Activated CD8-positive, alpha-beta memory T cell treated with anti-CD3 and anti-CD28 coated beads, Interleukin-2, amount 10 ng/mL, durations not matched to agents 7 days and 5 days (primary cell): ENCODE measurements at regions of chr17 and their contacts with region 1.

Region 1: DNA sequence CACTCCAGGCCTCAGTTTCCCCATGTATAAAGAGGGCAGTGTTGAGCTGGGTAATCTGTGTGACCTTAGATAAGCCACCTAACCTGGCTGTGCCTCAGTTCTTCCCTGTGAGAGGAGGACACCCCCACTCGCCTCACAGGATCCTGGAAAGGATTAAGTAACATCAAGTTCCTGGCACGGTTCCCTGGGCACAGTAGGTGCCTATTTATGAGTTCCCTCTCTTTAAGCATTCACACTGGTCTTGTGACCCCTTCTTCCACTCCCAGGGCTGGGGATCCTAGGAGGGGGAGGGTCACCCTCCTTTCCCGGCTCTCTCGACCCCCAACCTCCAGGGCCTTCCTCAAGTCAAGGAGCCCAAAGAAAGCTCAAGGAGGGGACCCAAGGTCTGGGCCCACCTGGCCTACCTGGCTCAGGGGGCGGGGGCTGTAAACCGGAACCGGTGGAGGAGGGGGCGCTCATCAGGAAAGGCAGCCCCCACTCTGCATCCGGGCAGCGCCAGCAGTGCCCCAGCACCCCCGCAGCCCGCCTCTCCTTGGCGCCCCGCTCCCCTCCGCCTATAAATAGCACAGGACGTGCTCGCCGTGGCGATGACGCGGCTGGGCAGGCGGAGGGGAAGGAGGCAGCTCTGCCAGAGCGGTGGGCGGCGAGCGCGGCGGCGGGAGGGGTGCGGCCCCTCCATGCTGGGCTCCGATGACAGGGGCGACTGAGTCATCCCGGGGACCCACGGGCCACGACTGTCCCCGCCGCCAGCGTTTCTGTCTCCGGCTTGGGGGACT is 9.4 kb downstream of the RPL19 start:
- DNase-seq: peak; percentile 79
- ATAC-seq: peak; percentile 65
- H3K4me3 Mint-ChIP-seq: peak overlapping the region; percentile 9
- H3K27ac Mint-ChIP-seq: no peak overlapping the region
- H3K4me1 Mint-ChIP-seq: peaks cover 12% of the 10 kb centered on the region
- H3K27me3 Mint-ChIP-seq: peaks cover 22% of the 10 kb centered on the region

Region 2: GRCh38 chr17:39225959-39226683 is 16.6 kb after region 1 on chr17:
- CTCF ChIA-PET with region 1: interaction called, 670 read pairs
- DNase-seq: peak; percentile 68
- ATAC-seq: peak; percentile 83
- H3K4me3 Mint-ChIP-seq: peak overlapping the region; percentile 55
- H3K27ac Mint-ChIP-seq: no peak overlapping the region
- H3K4me1 Mint-ChIP-seq: peaks cover 8% of the 10 kb centered on the region
- H3K27me3 Mint-ChIP-seq: peaks cover 48% of the 10 kb centered on the region

Region 3: DNA sequence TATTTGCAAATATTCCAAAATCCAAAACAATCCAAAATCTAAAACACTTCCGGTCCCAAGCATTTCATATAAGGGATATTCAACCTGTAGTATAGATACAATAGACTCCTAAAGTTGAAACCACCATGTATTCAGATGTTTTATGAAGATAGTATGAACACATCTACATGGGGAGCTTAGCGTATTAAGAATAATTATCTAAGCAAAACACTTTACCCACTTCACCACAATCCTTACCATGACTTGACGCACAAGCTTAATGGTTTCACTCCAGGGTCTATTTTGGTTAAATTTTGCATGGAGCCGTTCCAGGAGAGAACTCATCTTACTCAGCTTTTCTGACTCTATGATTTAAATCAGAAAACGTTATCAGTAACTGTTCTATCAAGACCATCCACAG is 238.1 kb after region 1 on chr17:
- CTCF ChIA-PET with region 1: no interaction called
- DNase-seq: no peak
- ATAC-seq: no peak
- H3K4me3 Mint-ChIP-seq: no peak overlapping the region
- H3K27ac Mint-ChIP-seq: no peak overlapping the region
- H3K4me1 Mint-ChIP-seq: peaks cover 28% of the 10 kb centered on the region
- H3K27me3 Mint-ChIP-seq: no peaks in the 10 kb centered on the region